ENCODE measurements at regions of chr11 and their contacts with region 1.

Region 1: DNA sequence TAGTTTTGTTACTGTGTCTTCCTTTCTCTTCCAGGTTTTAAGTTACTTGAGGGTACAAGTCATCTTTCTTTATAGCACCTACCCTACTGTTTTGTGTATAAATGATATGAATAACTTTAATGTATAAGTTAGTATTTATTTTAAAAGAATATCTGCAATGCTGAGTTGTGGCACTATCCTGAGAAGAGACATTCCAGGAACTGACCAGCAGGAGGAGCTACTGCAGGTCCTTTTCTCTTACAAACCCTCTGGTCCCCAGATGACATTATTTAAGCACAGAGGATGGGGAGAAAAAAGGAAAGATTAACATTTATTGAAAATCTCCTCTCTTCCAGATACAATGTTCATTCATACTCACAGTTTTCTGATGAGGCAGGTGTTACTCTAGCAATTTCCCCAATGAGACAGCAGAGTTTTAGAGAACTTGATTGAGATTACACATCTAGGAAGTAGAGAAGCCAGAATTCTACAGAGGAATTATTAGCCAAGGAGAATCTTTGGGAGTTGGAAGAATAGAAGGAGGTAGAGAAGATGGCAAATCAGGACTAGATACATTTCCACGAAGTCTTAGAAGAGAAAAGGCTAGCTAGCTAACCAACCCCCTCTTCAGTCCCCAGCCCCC is 541.2 kb upstream of the API5 start:
- DNase-seq: no peak
- ATAC-seq: no peak

Region 2: DNA sequence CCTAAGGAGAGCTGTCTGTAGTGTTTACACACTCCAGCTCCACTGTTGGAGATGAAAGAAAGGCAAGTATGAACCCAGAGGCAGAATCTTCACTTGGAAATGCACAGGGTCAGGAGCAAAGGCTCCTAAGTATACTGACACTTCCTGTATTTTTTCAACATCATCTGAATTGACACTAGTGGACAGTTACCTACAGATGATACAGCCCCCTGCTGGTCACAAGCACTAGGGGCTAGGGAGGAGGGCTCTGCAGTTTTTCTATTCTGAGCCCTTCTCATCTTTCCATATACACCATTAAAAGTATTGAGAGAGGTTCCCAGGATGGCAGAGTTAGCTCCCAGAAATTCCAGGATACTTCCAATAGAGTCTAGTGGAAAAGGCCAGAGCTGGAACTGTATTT is 250.9 kb after region 1 on chr11:
- intact Hi-C with region 1: loop called (anchors 2 kb)
- DNase-seq: no peak
- ATAC-seq: peak; percentile 64

Region 3: GRCh38 chr11:43130616-43131015 is 360.1 kb after region 1 on chr11:
- intact Hi-C with region 1: loop called (anchors 5 kb)
- DNase-seq: no peak
- ATAC-seq: no peak

Region 4: GRCh38 chr11:43282607-43283440 is 512.3 kb after region 1 on chr11:
- intact Hi-C with region 1: loop called (anchors 5 kb)
- DNase-seq: peak; percentile 49
- ATAC-seq: peak; percentile 58